Dorsolateral prefrontal cortex (tissue), 120 donors: ENCODE measurements at regions of chr10 and their contacts with region 1.

Region 1: DNA sequence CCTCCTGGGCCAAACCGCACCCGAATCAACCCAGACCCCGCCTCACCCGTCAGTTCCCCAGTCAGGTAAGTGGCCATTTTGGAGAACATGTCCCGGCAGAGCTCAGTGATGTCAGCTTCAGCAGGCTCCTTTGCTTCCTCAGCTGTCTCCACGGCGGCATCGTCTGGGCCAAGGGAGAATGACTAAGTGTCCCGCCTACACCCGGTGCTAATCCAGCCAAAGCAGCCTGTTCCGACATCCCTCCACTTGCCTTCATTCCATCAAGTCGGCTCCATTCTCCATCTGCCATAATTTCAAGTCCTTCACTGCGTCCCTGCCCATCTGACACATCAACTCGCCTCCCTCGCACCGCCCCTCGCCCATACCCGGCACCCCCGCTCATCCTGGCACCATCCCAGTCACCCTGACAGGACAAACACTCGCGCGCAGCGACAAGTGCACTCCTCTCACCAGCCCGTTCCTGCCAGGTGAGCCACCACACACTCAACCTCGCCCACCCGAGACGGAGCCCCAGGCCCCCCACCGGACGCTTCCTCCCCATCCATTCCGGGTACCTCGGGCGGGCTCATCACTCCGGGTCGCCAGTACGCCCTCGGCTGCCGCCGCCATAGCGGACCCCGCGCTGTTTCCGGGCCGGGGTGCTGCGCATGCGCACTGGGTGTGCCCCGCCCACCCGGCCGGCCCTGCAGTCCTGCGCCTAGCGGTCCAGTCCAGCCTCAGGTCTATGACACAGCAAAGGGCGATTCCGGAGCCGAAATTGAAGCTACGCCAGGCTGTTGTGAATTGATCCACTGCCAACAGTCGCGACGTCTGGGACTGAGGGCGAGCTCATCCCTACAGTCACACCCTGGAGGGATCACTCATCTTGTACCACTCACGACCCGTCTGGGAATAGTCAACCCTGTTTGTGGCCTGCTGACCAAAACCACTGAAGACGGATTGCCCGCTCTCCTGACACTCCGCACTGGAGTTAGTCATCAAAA is at the start of gene BLOC1S2:
- DNase-seq: peak; percentile 73 to 97 (median 87)
- H3K4me3 ChIP-seq: peak within 1 kb of the TSS; percentile 53 to 98 (median 87)
- H3K27ac ChIP-seq: peak within 1 kb of the TSS; percentile 77 to 99 (median 95)
- H3K27me3 ChIP-seq: no peaks in the 10 kb centered on the region
- CTCF ChIP-seq: peak in 55 of 56 donors; percentile 13 to 66 (median 43)
- total RNA-seq, gene BLOC1S2: 29.3 to 92.1 (median 61.9) TPM

Region 2: GRCh38 chr10:100267237-100268104 is 18.9 kb before region 1 on chr10 and contains the start of gene CWF19L1:
- intact Hi-C with region 1: loop called in 1 of 2 experiments (anchors 1 kb)
- DNase-seq: peak; percentile 75 to 92 (median 87)
- H3K4me3 ChIP-seq: peak within 1 kb of the TSS; percentile 67 to 100 (median 96)
- H3K27ac ChIP-seq: peak within 1 kb of the TSS in 56 of 59 donors; percentile 32 to 93 (median 74)
- H3K27me3 ChIP-seq: no peaks in the 10 kb centered on the region
- CTCF ChIP-seq: peak in 23 of 56 donors; percentile 8 to 48 (median 21)
- total RNA-seq, gene CWF19L1: 15.0 to 36.9 (median 24.6) TPM

Region 3: GRCh38 chr10:100327007-100327717 is 40.8 kb after region 1 on chr10:
- intact Hi-C with region 1: no loop called
- DNase-seq: peak in 4 of 10 donors; percentile 37 to 67 (median 57)
- H3K4me3 ChIP-seq: peak overlapping the region in 21 of 59 donors; percentile 0 to 32 (median 14)
- H3K27ac ChIP-seq: peak overlapping the region in 54 of 59 donors; percentile 9 to 84 (median 69)
- H3K27me3 ChIP-seq: peaks cover 0 to 2% (median 0%) of the 10 kb centered on the region in 45 donors
- CTCF ChIP-seq: no peak

Region 4: GRCh38 chr10:100338434-100339036 is 52.2 kb after region 1 on chr10:
- intact Hi-C with region 1: loop called in 1 of 2 experiments (anchors 5 kb)
- DNase-seq: peak; percentile 66 to 88 (median 82)
- H3K4me3 ChIP-seq: no peak overlapping the region
- H3K27ac ChIP-seq: peak overlapping the region in 33 of 59 donors; percentile 6 to 99 (median 59)
- H3K27me3 ChIP-seq: no peaks in the 10 kb centered on the region
- CTCF ChIP-seq: peak; percentile 72 to 97 (median 92)

Region 5: GRCh38 chr10:100529475-100530298 is 243.3 kb after region 1 on chr10 and contains the start of gene NDUFB8:
- intact Hi-C with region 1: loop called in 1 of 2 experiments (anchors 5 kb)
- DNase-seq: peak; percentile 79 to 94 (median 90)
- H3K4me3 ChIP-seq: peak within 1 kb of the TSS; percentile 72 to 99 (median 92)
- H3K27ac ChIP-seq: peak within 1 kb of the TSS; percentile 42 to 94 (median 86)
- H3K27me3 ChIP-seq: no peaks in the 10 kb centered on the region
- CTCF ChIP-seq: peak in 37 of 56 donors; percentile 4 to 58 (median 32)
- total RNA-seq, gene NDUFB8: 219 to 414 (median 337) TPM